Transverse colon (tissue), 4 donors: ENCODE measurements at regions of chr4 and their contacts with region 1.

Region 1: DNA sequence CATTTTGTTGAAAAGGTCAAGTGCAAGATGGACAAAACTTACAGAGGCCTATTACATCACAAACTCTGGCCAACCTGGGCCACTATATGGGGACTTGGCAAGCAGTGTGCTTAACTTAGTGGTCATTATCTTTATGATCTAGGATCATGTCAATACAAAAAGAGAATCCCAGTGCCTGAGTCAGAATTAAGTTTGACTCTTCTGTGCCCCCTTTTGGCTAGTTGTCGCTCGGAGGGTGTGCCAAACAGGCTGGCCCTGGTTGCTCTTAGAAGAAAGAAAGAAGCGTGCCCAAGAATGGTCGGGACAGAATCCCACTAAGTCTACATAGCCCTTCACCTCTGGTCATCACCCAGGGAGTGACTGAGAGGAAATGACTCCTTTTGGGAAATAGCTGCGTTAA is 100.1 kb downstream of the EIF4E start:
- DNase-seq: peak; percentile 13
- H3K4me3 ChIP-seq: no peak overlapping the region
- H3K27ac ChIP-seq: no peak overlapping the region
- H3K4me1 ChIP-seq: peaks cover 0 to 6% (median 0%) of the 10 kb centered on the region in 4 donors
- H3K27me3 ChIP-seq: no peaks in the 10 kb centered on the region
- CTCF ChIP-seq: peak in 1 of 5 experiments; percentile 12
- EP300 ChIP-seq: no peak
- POLR2A ChIP-seq: no peak

Region 2: DNA sequence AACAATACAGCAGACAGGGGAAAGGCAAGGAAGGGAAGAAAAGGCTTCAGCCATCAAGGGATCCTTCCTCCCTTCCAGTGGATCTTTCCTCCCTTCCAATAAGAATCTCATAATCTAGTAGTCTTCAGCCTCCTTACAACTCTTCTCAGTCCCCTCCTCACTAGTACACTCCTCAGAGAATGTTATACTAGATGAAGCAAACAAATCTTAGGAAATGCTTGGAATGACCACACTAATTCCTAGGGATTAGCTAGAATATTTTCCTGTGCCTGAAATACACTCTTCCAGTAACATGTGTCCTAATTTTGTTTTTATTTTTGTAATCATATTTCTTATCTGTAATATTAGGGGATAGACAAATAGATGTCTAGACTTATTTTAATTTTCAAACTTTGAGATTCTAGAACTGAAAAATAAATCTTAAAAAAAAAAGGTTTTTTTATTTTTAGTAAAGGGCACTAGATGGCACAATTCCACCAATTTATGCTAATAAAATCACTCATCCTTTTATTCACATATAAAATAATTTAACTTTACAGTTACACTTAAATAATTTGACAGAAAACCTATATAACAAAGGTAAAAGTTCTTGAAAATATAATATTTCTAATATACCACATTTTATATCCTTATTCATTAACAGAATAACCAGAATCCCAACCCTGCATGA is 678.6 kb before region 1 on chr4:
- in situ Hi-C with region 1: loop called in 1 of 4 experiments (anchors 25 kb)
- intact Hi-C with region 1: no loop called
- DNase-seq: no peak
- H3K4me3 ChIP-seq: no peak overlapping the region
- H3K27ac ChIP-seq: no peak overlapping the region
- H3K4me1 ChIP-seq: no peaks in the 10 kb centered on the region
- H3K27me3 ChIP-seq: no peaks in the 10 kb centered on the region
- CTCF ChIP-seq: peak in 1 of 5 experiments; percentile 3
- EP300 ChIP-seq: no peak
- POLR2A ChIP-seq: no peak

Region 3: GRCh38 chr4:99134586-99134985 is 305.8 kb after region 1 on chr4:
- in situ Hi-C with region 1: no loop called
- intact Hi-C with region 1: no loop called
- DNase-seq: no peak
- H3K4me3 ChIP-seq: no peak overlapping the region
- H3K27ac ChIP-seq: no peak overlapping the region
- H3K4me1 ChIP-seq: peaks cover 0 to 7% (median 0%) of the 10 kb centered on the region in 4 donors
- H3K27me3 ChIP-seq: no peaks in the 10 kb centered on the region
- CTCF ChIP-seq: no peak
- EP300 ChIP-seq: no peak
- POLR2A ChIP-seq: no peak

Region 4: DNA sequence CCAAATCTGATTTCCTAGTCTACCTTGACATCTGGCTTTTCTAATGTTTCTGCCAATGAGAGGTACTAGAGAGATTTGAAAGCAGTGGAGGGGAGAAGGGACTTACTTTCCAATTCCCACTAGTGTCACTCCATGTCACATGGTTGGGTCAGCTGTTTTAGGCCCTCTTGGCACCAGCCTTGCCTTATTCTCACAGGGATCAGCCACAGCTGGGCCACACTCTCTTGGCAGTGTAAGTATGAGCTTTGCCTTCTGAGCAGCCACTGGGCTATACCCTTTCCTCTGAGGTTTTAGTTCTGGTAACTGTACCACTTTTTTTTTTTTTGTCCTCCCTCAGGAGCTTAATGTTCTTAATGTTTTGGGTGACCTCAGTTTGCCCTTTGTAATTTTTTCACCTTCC is 534.0 kb after region 1 on chr4:
- in situ Hi-C with region 1: no loop called
- intact Hi-C with region 1: no loop called
- DNase-seq: no peak
- H3K4me3 ChIP-seq: no peak overlapping the region
- H3K27ac ChIP-seq: peak overlapping the region in 2 of 4 donors; percentile 30 to 45
- H3K4me1 ChIP-seq: peaks cover 0 to 12% (median 6%) of the 10 kb centered on the region in 4 donors
- H3K27me3 ChIP-seq: no peaks in the 10 kb centered on the region
- CTCF ChIP-seq: no peak
- EP300 ChIP-seq: no peak
- POLR2A ChIP-seq: no peak

Region 5: DNA sequence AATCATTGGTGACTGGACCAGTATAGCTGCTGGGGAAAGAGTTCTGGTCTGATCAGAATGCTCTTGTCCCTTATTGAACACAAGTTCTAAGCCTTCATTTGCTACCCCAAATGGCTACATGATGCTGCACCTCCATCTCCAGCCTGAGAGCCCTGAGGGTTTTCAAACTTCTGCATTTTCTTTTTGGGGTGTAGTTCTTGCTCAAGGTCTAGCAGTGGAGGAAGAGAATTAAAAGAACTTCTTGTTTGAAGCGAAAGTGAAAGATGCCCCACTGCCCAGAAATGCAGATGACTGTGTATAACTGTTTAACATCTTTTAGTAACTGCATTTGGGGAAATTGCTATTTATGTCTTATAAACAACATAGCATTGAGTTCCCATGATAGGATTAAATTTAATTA is 1026.9 kb after region 1 on chr4:
- in situ Hi-C with region 1: no loop called
- intact Hi-C with region 1: no loop called
- DNase-seq: no peak
- H3K4me3 ChIP-seq: no peak overlapping the region
- H3K27ac ChIP-seq: peak overlapping the region in 1 of 4 donors; percentile 42
- H3K4me1 ChIP-seq: no peaks in the 10 kb centered on the region
- H3K27me3 ChIP-seq: no peaks in the 10 kb centered on the region
- CTCF ChIP-seq: no peak
- EP300 ChIP-seq: no peak
- POLR2A ChIP-seq: no peak